ENCODE measurements at regions of chr10 and their contacts with region 1.

Region 1: DNA sequence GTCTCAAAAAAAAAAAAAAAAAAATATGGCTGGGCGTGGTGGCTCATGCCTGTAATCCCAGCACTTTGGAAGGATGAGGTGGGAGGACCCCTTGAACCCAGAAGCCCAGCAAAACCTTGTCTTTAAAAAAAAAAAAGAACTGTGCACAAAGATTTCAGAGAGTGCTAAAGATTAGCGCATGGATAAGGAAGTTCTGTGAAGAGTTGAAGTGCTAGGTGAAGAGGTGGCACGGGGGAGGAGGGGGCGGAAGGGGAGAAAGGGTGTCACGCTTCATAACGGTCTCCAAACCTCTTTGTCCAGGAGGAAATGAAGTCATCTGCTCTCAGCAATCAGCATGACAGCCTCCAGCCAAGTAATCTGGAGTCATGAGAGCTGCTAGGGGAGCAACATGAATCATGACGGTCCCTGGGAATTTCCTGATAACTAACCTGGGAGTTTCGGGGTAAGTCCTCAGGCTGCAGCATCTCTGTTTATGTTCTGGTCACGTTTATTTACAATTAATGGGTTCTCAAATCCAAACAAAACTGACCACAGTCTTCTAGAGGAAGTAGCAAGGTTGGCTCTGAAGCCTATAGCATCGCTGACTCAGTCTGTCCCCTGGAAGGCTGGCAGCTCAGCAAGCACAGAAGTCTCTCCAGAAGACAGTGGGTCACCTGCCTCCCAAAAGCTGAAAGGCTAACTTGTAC is 1.9 kb upstream of the PLAU start:
- DNase-seq: peak; percentile 77 to 100
- H3K4me3 ChIP-seq: peak overlapping the region; percentile 85; the same call in 1 of the 2 replicates
- H3K27ac ChIP-seq: peak overlapping the region; percentile 97
- H3K4me1 ChIP-seq: peaks cover 85% of the 10 kb centered on the region
- H3K27me3 ChIP-seq: no peaks in the 10 kb centered on the region
- CTCF ChIP-seq: no peak

Region 2: GRCh38 chr10:72483471-72483870 is 1425.5 kb before region 1 on chr10:
- CTCF ChIA-PET with region 1: no interaction called
- POLR2A ChIA-PET with region 1: no interaction called
- intact Hi-C with region 1: no loop called
- DNase-seq: no peak
- H3K4me3 ChIP-seq: no peak overlapping the region
- H3K27ac ChIP-seq: no peak overlapping the region
- H3K4me1 ChIP-seq: no peaks in the 10 kb centered on the region
- H3K27me3 ChIP-seq: no peaks in the 10 kb centered on the region
- CTCF ChIP-seq: no peak

Region 3: DNA sequence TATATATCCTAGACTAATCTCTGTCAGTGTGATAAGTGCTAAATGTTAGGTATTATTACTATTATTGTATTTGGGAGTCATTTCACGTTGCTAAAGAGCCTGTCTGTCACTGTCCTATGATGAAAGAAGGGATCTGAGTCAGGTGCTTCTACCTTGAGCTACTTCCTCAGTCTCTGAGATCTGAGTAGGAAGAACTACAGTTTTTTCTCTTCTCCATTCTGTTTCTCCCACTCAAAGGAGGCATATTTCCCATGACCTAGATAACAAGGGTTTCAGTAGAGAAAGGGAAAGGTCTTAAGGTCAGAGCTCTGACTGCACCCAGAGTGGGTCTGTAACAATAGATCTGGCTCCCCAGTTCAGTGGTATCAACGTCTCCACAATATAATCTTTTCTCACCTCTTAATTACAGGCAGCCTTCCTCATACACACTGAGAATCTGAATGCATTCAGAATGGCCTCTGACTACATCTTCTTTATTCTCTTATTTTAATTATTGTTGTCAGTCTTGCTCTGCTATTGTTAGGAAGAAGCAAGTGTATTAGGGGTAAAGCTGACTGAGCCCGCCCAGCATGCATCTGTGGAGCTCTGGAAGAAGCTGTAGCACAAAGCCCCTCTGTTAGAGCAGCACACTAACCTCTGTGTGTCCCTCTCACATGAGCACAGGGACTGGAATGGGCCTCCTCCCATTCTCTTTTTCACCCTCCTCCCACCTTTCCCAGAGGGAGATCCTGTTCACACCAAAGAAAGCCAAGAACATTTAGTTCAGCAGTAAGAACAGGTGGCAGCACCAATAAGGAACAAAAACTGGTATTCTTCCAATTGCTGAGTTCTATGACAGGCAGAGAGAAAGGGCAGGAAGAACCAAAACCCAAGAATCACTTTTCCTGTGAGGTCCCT is 355.9 kb before region 1 on chr10:
- CTCF ChIA-PET with region 1: no interaction called
- POLR2A ChIA-PET with region 1: no interaction called
- intact Hi-C with region 1: no loop called
- DNase-seq: no peak
- H3K4me3 ChIP-seq: no peak overlapping the region
- H3K27ac ChIP-seq: no peak overlapping the region
- H3K4me1 ChIP-seq: no peaks in the 10 kb centered on the region
- H3K27me3 ChIP-seq: no peaks in the 10 kb centered on the region
- CTCF ChIP-seq: no peak

Region 4: GRCh38 chr10:73871915-73872710 is 36.9 kb before region 1 on chr10:
- CTCF ChIA-PET with region 1: no interaction called
- POLR2A ChIA-PET with region 1: interaction called, 24 read pairs
- intact Hi-C with region 1: loop called (anchors 1 kb)
- DNase-seq: peak; percentile 94 to 100
- H3K4me3 ChIP-seq: peak overlapping the region; percentile 64
- H3K27ac ChIP-seq: peak overlapping the region; percentile 88
- H3K4me1 ChIP-seq: peaks cover 75% of the 10 kb centered on the region
- H3K27me3 ChIP-seq: no peaks in the 10 kb centered on the region
- CTCF ChIP-seq: peak; percentile 58; the same call in 1 of the 2 replicates

Region 5: GRCh38 chr10:73931767-73932619 is 23.0 kb after region 1 on chr10:
- CTCF ChIA-PET with region 1: no interaction called
- POLR2A ChIA-PET with region 1: interaction called, 4 read pairs
- intact Hi-C with region 1: loop called (anchors 1 kb)
- DNase-seq: peak; percentile 93 to 99
- H3K4me3 ChIP-seq: peak overlapping the region; percentile 27; the same call in 1 of the 2 replicates
- H3K27ac ChIP-seq: peak overlapping the region; percentile 97
- H3K4me1 ChIP-seq: peaks cover 43% of the 10 kb centered on the region
- H3K27me3 ChIP-seq: no peaks in the 10 kb centered on the region
- CTCF ChIP-seq: no peak

Region 6: GRCh38 chr10:73965890-73966768 is 57.1 kb after region 1 on chr10:
- CTCF ChIA-PET with region 1: no interaction called
- POLR2A ChIA-PET with region 1: no interaction called
- intact Hi-C with region 1: loop called (anchors 1 kb)
- DNase-seq: peak; percentile 93 to 99
- H3K4me3 ChIP-seq: peak overlapping the region; percentile 43; the same call in 1 of the 2 replicates
- H3K27ac ChIP-seq: peak overlapping the region; percentile 99
- H3K4me1 ChIP-seq: peaks cover 38% of the 10 kb centered on the region
- H3K27me3 ChIP-seq: no peaks in the 10 kb centered on the region
- CTCF ChIP-seq: no peak

Region 7: DNA sequence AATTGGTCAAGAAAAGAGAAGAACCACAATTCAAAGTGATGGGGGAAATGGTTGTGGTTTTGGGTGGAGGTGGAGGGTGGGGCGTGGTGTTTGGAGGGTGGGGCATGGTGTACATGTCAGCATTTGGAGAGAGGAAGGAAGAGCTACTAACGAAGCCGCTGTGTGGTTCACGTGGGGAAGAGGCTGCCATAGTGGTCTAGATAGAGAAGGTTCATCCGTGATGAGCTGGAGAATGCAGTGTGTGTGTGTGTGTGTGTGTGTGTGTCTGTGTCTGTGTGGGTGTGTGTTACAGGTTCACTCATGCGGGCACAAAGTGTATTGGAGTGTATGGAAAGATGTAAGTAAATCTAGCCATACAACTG is 82.9 kb after region 1 on chr10:
- CTCF ChIA-PET with region 1: no interaction called
- POLR2A ChIA-PET with region 1: interaction called, 40 read pairs
- intact Hi-C with region 1: no loop called
- DNase-seq: no peak
- H3K4me3 ChIP-seq: no peak overlapping the region
- H3K27ac ChIP-seq: no peak overlapping the region
- H3K4me1 ChIP-seq: 0 out of 2 replicates have a peak, but pooled peaks cover 5% of the 10 kb centered on the region
- H3K27me3 ChIP-seq: no peaks in the 10 kb centered on the region
- CTCF ChIP-seq: no peak